ENCODE measurements at regions of chr18 and their contacts with region 1.

Region 1: DNA sequence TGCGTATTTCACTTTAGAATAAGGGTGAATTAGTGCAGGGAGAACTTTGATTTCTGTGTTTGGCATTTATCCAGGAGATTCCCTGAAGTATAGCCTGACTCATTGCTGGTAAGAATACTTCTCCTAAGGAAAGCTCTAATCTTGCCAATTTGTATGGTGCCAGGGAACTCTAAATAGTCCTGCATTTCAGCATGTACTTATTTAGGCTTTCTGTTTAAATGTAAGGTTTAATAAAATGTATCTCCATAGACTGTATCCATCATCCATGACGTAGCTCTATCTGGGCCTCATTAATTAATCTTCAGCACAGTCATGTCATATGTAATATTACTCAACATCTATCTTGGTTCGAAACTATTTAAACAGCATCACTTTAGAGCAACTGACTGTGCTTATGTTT is 127.7 kb downstream of the DOK6 start:
- DNase-seq: no peak
- H3K4me3 ChIP-seq: no peak overlapping the region
- H3K27ac ChIP-seq: no peak overlapping the region
- H3K4me1 ChIP-seq: peaks cover 0 to 8% (median 4%) of the 10 kb centered on the region in 4 donors
- H3K27me3 ChIP-seq: no peaks in the 10 kb centered on the region
- CTCF ChIP-seq: no peak

Region 2: GRCh38 chr18:69387186-69387585 is 141.2 kb before region 1 on chr18:
- intact Hi-C with region 1: no loop called
- DNase-seq: no peak
- H3K4me3 ChIP-seq: no peak overlapping the region
- H3K27ac ChIP-seq: no peak overlapping the region
- H3K4me1 ChIP-seq: no peaks in the 10 kb centered on the region
- H3K27me3 ChIP-seq: no peaks in the 10 kb centered on the region
- CTCF ChIP-seq: no peak

Region 3: GRCh38 chr18:69580107-69580506 is 51.7 kb after region 1 on chr18:
- intact Hi-C with region 1: loop called (anchors 10 kb)
- DNase-seq: no peak
- H3K4me3 ChIP-seq: no peak overlapping the region
- H3K27ac ChIP-seq: no peak overlapping the region
- H3K4me1 ChIP-seq: no peaks in the 10 kb centered on the region
- H3K27me3 ChIP-seq: no peaks in the 10 kb centered on the region
- CTCF ChIP-seq: no peak